Activated CD4-positive, alpha-beta T cell treated with anti-CD3 and anti-CD28 coated beads for 36 hours (primary cell): ENCODE measurements at regions of chr9 and their contacts with region 1.

Region 1: DNA sequence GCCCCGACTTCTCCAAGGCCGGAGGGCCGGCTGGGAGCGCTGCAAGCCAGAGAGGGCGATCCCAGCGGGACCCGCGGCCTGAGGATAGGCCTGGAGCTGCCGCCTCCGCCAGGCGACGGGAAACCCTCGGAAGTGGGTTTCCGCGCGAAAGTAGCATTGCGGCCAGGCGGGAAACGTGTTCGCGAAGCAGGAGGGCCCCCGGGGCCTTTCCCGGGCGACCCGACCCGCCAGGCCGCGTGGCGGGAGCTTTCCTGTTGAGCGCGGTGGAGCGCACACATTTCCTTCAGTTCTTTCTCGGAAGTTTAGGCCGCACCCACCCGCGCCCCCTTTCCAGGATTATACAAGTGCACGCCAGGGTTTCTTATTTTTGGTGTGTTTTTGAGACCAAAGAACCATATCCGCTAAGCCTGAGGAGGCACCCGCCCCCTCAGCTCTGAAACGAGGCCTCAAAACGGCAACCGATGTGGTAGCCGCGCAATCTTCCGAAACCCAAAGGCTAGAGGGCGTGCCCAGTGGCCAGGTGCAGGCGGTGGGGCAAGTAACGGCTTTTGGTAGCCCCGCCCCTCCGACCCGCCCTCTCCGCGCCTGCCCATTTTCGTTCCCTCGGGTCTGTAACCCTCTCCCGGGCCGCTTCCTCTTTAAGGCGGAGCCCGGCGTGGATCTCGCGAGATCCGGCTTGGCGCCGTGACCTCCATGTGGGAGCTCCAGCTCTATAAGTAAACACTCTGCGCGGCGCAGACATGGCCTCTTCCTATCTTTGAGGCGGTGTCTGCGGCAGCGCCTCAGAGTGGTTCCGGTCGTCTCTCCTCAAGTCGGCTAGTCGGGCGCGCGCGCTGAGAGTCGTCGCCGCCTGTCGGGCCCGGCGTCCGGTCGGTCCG is at the start of gene UHRF2:
- DNase-seq: peak; percentile 100
- ATAC-seq: peak; percentile 91
- H3K4me3 Mint-ChIP-seq: peak within 1 kb of the TSS; percentile 83
- H3K27ac Mint-ChIP-seq: peak within 1 kb of the TSS; percentile 93
- H3K4me1 Mint-ChIP-seq: peaks cover 32% of the 10 kb centered on the region
- H3K27me3 Mint-ChIP-seq: peaks cover 6% of the 10 kb centered on the region
- total RNA-seq, gene UHRF2: 63.7 to 70.9 TPM

Region 2: DNA sequence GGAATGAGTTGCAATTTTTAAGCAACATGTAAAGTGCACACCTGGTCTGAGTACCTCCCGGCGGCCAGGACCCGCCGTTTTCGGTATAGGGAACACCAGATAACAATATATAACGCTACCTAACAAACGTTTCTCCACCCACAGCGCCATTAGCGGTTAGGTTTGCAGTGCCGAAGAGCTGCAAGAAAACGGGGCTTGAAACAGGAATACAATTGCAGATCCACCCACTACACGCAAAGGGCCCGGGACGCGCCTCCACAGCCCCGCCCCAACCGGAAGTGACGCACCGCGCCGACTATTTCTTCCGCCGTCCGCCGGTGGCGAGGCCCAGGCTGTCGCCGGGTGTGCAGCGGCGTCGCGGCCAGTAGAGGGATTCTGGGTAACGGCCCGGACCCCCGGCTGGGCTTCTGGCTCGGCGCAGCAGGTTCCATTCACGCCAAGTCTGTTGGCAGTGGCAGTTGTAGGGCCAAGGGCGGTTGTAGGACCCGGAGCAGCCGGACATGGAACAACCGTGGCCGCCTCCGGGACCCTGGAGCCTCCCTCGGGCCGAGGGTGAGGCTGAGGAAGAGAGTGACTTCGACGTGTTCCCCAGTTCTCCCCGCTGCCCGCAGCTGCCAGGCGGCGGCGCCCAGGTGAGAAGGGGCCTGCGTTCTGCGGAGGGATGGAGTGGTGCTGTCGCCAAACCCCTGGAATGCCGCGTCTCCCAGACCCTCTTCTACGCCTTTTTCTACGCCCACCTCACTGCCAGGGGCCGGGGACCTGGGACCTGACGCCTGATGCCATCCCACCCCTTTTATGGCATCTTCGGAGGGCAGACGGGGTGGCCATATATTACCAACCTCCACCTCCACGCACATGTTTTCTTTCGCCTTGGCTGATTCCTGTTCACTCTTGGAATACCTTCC is 1733.2 kb before region 1 on chr9 and contains the start of gene CDC37L1:
- CTCF ChIA-PET with region 1: no interaction called
- POLR2A ChIA-PET with region 1: no interaction called
- intact Hi-C with region 1: loop called in 1 of 2 experiments (anchors 10 kb)
- DNase-seq: peak; percentile 99
- ATAC-seq: peak; percentile 95
- H3K4me3 Mint-ChIP-seq: no peak within 1 kb of the TSS
- H3K27ac Mint-ChIP-seq: no peak within 1 kb of the TSS
- H3K4me1 Mint-ChIP-seq: peaks cover 11% of the 10 kb centered on the region
- H3K27me3 Mint-ChIP-seq: no peaks in the 10 kb centered on the region
- total RNA-seq, gene CDC37L1: 8.0 to 9.8 TPM

Region 3: GRCh38 chr9:5843794-5844504 is 568.8 kb before region 1 on chr9:
- CTCF ChIA-PET with region 1: no interaction called
- POLR2A ChIA-PET with region 1: interaction called, 3 read pairs
- intact Hi-C with region 1: loop called (anchors 5 to 10 kb)
- DNase-seq: no peak
- ATAC-seq: no peak
- H3K4me3 Mint-ChIP-seq: peak overlapping the region; percentile 26
- H3K27ac Mint-ChIP-seq: peak overlapping the region; percentile 45
- H3K4me1 Mint-ChIP-seq: peaks cover 58% of the 10 kb centered on the region
- H3K27me3 Mint-ChIP-seq: no peaks in the 10 kb centered on the region

Region 4: DNA sequence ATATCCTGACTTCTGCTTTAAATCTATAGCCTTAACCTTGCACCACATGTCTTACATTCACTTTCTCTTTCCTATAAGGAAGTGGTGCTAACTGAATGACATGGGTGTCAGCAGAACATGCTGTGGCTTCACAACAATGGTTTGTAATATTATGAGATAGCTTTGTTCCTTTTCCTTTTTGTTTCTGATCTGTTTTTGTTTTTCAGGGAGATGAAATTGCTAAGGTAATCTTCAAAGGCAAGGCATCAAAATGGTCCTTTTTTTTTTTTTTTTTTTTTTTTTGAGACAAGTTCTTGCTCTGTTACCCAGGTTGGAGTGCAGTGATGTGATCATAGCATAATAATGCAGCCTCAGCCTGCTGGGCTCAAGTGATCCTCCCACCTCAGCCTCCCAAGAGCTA is 343.7 kb before region 1 on chr9:
- CTCF ChIA-PET with region 1: no interaction called
- POLR2A ChIA-PET with region 1: no interaction called
- intact Hi-C with region 1: loop called in 1 of 2 experiments (anchors 10 kb)
- DNase-seq: peak; percentile 17
- ATAC-seq: peak; percentile 99
- H3K4me3 Mint-ChIP-seq: peak overlapping the region; percentile 27
- H3K27ac Mint-ChIP-seq: peak overlapping the region; percentile 77
- H3K4me1 Mint-ChIP-seq: peaks cover 21% of the 10 kb centered on the region
- H3K27me3 Mint-ChIP-seq: no peaks in the 10 kb centered on the region

Region 5: GRCh38 chr9:6460189-6460768 is 47.6 kb after region 1 on chr9:
- CTCF ChIA-PET with region 1: no interaction called
- POLR2A ChIA-PET with region 1: no interaction called
- intact Hi-C with region 1: loop called in 1 of 2 experiments (anchors 5 kb)
- DNase-seq: no peak
- ATAC-seq: no peak
- H3K4me3 Mint-ChIP-seq: no peak overlapping the region
- H3K27ac Mint-ChIP-seq: no peak overlapping the region
- H3K4me1 Mint-ChIP-seq: peaks cover 30% of the 10 kb centered on the region
- H3K27me3 Mint-ChIP-seq: no peaks in the 10 kb centered on the region

Region 6: DNA sequence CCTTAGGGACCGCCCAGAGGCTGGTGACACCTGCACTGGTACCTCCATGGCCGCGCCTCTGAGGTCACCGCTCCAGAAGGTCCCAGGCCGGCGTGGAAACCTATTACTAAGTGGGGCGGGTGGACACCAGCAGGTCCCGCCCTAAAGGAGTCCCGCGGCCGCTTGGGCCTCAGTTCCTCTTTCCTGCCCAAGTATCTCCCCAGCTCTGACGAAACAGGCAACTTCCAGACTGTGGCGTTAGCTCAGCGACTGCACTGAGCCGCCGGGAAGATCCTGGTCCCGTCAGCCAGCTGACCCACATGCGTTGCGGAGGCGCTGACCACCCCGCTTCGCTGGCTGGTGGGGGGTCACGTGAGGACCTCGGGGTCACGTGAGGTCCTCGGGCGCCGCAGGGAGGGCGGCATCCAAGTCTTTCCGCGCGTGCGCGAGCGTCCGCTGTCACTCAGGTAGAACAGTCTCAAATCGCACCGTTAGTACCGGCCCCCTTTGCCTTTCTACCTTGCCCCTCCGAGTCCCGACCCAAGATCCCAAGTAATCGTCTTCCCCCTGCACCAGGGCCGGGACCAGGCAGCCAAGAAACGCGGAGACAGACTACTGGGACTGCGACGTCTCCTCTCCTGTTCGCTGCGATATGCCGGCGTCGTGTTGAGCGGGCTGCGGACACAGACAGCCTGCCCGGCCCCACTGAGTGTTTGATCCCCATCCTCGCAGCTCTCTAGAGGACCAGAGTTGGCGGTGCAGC is 291.3 kb after region 1 on chr9:
- CTCF ChIA-PET with region 1: no interaction called
- POLR2A ChIA-PET with region 1: no interaction called
- intact Hi-C with region 1: loop called in 1 of 2 experiments (anchors 1 kb)
- DNase-seq: peak; percentile 93
- ATAC-seq: peak; percentile 88
- H3K4me3 Mint-ChIP-seq: peak overlapping the region; percentile 75
- H3K27ac Mint-ChIP-seq: peak overlapping the region; percentile 77
- H3K4me1 Mint-ChIP-seq: peaks cover 14% of the 10 kb centered on the region
- H3K27me3 Mint-ChIP-seq: no peaks in the 10 kb centered on the region